H1 (cell line): ENCODE measurements at regions of chr14 and their contacts with region 1.

Region 1: GRCh38 chr14:99793213-99794150 is at the start of gene EML1:
- DNase-seq: peak; percentile 41 to 86
- H3K4me3 ChIP-seq: peak within 1 kb of the TSS; percentile 65 to 87 (median 72)
- H3K27ac ChIP-seq: no peak within 1 kb of the TSS
- H3K4me1 ChIP-seq: peaks cover 0 to 8% (median 2%) of the 10 kb centered on the region in 4 experiments; a peak in 4 of 7 replicates
- H3K27me3 ChIP-seq: peaks cover 0 to 8% (median 0%) of the 10 kb centered on the region in 4 experiments; a peak in 3 of 7 replicates
- CTCF ChIP-seq: peak in 2 of 3 experiments; percentile 0 to 45; a peak in 2 of 4 replicates
- EP300 ChIP-seq: no peak
- POLR2A ChIP-seq: peak in 1 of 2 experiments; percentile 44; a peak in 1 of 3 replicates
- RAD21 ChIP-seq: peak in 1 of 2 experiments; percentile 11; a peak in 1 of 4 replicates
- total RNA-seq, gene EML1: 24.7 and 32.9 TPM in 2 replicates

Region 2: DNA sequence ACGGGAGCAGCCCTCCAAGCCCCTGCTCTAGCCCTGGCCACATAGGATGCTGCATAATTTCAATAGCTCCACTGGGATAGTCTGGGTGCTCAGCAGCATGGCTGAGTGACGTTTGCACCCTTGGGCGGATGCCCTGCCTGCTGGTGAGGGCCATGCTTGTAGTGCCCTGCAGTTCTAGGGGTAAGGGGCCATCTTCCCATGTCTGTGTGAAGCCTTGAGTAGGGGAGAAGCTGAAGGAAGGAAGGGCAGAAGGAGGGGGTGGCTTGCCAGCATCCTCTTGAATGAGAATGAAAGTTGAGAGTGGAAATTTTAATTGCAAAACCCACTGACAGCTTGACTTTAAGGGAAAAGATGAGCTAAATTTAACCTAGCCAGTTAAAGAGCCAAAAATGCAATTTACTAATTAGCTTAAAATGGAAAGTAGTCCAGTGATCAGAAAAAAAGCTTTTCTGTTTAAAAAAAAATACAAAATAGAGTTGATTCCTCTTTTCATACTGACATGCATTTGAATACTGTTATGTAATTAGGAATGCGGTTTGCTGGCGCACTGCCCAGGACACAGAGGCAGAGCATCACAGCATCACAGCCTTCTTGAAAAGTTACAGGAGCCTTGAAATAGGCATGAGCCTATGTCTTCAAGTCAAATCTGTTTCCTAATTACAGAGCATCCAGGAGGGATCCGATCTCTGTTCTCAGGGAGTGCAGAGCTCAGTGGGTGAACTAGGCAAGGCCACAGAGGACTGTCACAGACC is 18.8 kb before region 1 on chr14:
- CTCF ChIA-PET with region 1: interaction called, 11 read pairs
- POLR2A ChIA-PET with region 1: interaction called, 3 read pairs
- DNase-seq: no peak
- H3K4me3 ChIP-seq: 0 out of 8 replicates have a peak overlapping the region, but pooled peaks of 1 of the 4 experiments have one; percentile 10
- H3K27ac ChIP-seq: no peak overlapping the region
- H3K4me1 ChIP-seq: peaks cover 12 to 27% (median 20%) of the 10 kb centered on the region in 4 experiments
- H3K27me3 ChIP-seq: no peaks in the 10 kb centered on the region
- CTCF ChIP-seq: no peak
- EP300 ChIP-seq: no peak
- POLR2A ChIP-seq: no peak
- RAD21 ChIP-seq: no peak

Region 3: DNA sequence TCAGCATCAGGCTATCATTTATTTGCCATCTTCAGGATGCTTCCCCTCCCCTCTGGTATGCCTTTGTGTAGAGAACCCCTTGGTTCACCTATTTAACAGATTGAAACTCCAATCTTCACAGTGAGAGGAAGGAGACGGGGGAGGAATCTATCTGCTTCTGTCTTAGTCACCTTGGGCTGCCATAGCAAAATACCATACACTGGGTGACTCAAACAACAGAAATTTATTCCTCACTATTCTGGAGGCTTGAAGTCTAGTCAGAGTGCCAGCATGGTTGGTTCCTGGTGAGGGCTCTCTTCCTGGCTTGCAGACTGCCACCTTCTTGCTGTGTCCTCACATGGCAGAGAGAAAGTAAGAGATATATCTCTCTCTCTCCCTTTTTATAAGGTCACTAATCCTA is 13.7 kb before region 1 on chr14:
- CTCF ChIA-PET with region 1: interaction called, 11 read pairs
- POLR2A ChIA-PET with region 1: interaction called, 3 read pairs
- DNase-seq: no peak
- H3K4me3 ChIP-seq: no peak overlapping the region
- H3K27ac ChIP-seq: no peak overlapping the region; the same call in 1 of the 2 replicates
- H3K4me1 ChIP-seq: peaks cover under 1 to 20% (median 5%) of the 10 kb centered on the region in 4 experiments; a peak in 6 of 7 replicates
- H3K27me3 ChIP-seq: no peaks in the 10 kb centered on the region
- CTCF ChIP-seq: no peak
- EP300 ChIP-seq: no peak
- POLR2A ChIP-seq: no peak
- RAD21 ChIP-seq: no peak

Region 4: DNA sequence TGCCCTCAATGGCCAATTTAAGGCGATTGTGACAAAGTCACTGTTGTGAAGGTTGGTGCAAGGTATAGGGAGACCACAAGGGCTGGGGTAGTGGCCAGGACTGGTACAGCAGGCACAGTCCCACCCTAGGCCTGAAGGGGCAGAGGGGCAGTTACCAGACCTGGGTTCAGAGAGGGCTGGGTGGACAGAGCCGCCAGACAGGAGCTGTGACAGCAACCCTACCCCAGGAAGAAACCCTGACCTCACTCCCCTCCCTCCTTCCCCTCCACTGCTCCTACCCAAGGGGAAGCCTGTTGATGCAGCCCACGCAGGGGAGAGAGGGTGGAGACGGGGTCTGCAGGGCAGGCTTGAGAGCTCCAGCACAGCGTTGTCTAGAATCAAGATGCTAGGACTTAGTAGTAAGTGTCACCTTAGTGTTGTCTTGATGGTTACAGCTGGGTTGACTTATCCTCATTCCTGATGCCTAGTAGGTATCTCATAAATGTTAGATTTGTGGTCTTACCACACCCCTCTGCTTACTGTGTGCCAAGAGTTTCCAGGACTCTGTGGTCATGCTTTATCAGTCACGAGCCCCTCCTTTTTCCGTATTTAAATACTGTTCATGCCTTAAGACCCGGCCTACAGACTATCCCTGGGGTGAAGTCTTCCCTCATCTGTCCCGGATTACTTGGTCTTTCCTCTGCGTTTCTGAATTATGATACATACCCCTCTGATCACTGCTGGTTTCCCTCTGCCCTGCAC is 14.1 kb after region 1 on chr14:
- CTCF ChIA-PET with region 1: interaction called, 18 read pairs
- POLR2A ChIA-PET with region 1: interaction called, 6 read pairs
- DNase-seq: no peak
- H3K4me3 ChIP-seq: no peak overlapping the region
- H3K27ac ChIP-seq: no peak overlapping the region
- H3K4me1 ChIP-seq: no peaks in the 10 kb centered on the region; a peak in 1 of 7 replicates
- H3K27me3 ChIP-seq: no peaks in the 10 kb centered on the region
- CTCF ChIP-seq: peak; percentile 59 to 93 (median 68)
- EP300 ChIP-seq: no peak
- POLR2A ChIP-seq: no peak
- RAD21 ChIP-seq: peak in 1 of 2 experiments; percentile 50; a peak in 3 of 4 replicates